GM12878 (cell line): ENCODE measurements at regions of chr14 and their contacts with region 1.

Region 1: DNA sequence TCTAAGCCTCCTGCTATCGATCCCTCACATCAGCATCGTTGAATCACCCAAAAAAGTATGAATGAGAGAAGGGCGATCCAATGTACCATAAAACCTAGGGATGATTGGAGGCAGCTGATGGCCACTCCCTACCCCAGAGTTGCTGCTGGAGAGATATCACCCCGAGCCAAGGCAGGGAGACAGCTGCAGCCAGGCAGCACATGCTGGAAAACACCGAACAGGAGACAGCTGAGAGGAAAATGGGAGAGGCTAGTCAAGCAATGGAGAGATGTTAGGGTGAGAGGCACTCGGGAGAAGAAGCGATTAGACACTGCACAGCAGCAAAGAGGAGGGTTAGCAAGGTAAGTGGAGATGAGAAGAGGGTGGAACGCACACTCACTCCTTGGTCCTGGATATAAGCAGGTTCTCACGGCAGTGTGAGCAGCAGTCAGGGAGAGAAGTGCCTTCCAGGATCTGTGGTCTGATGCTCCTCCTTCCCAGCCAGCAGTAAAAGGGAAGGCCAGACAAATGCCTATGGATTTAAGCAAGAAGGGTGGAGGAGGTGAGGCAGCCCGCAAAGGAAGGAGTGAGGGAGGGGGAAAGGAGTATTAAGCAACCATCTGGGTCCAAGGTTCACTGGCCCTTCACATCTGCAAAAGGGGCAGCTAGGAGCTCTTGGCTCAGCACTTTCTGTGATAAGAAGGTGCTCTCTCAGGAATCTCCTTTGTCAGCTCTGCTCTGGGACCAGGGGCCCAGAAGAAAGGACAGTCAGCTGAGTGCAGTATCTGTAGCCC is at the start of gene SLC7A7:
- DNase-seq: no peak
- ATAC-seq: peak; percentile 6
- H3K4me3 ChIP-seq: peak within 1 kb of the TSS; percentile 66
- H3K27ac ChIP-seq: peak within 1 kb of the TSS; percentile 75
- H3K4me1 ChIP-seq: peaks cover 28% of the 10 kb centered on the region
- H3K27me3 ChIP-seq: no peaks in the 10 kb centered on the region
- CTCF ChIP-seq: no peak
- EP300 ChIP-seq: no peak
- POLR2A ChIP-seq: no peak
- RAD21 ChIP-seq: no peak
- polyA plus RNA-seq, gene SLC7A7: 48.1 to 72.7 TPM

Region 2: DNA sequence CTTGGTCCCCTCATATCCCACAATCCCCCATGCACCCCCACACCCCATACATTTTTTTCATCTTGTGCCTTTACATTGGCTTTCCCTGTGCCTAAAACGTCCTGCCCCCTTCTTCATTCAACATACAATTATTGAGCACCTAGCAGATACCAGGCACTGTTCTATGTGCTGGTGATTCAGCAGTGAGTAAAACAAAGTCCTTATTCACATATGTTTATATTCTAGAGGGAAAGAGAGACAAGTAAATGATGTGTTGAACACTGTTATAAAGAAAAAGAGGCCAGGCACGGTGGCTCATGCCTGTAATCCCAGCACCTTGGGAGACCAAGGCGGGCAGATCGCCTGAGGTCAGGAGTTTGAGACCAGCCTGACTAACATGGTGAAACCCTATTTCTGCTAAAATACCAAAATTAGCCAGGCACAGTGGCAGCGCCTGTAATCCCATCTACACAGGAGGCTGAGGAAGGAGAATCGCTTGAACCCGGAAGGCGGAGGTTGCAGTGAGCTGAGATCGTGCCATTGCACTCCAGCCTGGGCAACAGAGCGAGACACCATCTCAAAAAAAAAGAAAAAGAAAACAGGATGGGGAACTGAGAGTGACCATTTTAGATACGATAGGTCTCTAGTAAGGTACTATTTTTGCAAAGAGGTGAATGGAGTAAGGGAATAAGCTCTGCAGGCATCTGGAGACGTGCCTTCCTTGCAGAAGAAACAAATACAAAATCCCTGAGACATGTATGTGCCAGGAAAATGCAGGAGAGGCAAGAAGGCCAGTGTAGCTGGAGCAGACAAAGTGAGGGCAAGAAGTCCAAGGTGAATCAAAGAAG is 12.1 kb before region 1 on chr14:
- CTCF ChIA-PET with region 1: interaction called, 37 read pairs
- POLR2A ChIA-PET with region 1: interaction called, 245 read pairs
- RAD21 ChIA-PET with region 1: interaction called, 219 read pairs
- SMC1A ChIA-PET with region 1: interaction called, 395 read pairs
- in situ Hi-C with region 1: no loop called
- intact Hi-C with region 1: no loop called
- DNase-seq: no peak
- ATAC-seq: peak; percentile 80
- H3K4me3 ChIP-seq: peak overlapping the region; percentile 61
- H3K27ac ChIP-seq: peak overlapping the region; percentile 98
- H3K4me1 ChIP-seq: peaks cover 58% of the 10 kb centered on the region
- H3K27me3 ChIP-seq: no peaks in the 10 kb centered on the region
- CTCF ChIP-seq: no peak
- EP300 ChIP-seq: 0 out of 4 replicates have a peak, but pooled peaks of 1 of the 2 experiments have one; percentile 11
- POLR2A ChIP-seq: no peak
- RAD21 ChIP-seq: no peak

Region 3: DNA sequence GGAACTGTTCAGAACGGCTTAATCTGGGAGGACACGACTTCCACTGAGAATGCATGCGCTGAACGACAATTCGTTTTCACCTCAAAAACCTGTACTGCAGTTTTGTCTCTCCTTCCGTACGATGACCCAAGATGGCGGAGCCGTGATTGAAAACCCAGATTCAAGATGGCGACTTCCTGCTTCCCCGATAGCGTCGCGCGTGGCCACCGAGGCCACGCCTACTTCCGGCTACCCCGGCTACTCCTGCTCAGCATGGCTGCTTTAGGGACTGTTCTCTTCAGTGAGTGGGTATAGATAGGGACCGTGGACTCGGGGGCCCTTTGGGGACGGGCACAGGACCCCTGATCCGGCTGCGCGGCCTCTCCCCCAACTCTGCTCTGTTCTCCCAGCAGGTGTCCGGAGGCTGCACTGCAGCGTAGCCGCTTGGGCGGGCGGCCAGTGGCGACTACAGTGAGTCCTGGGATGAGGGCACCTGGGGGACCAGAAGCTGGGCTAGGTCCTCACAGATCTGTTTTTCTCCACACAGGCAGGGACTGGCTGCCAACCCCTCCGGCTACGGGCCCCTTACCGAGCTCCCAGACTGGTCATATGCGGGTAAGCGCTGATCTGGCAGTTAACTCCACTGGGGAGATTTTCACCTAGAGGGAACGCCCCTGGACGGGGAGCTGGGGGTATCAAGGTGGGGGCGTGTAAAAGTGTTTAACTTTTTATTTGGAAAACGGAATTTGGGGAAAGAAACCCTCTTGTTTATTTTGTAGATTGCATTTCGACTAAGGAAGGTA is 14.7 kb after region 1 on chr14 and contains the start of gene MRPL52:
- CTCF ChIA-PET with region 1: interaction called, 14 read pairs
- POLR2A ChIA-PET with region 1: interaction called, 5 read pairs
- RAD21 ChIA-PET with region 1: interaction called, 3 read pairs
- SMC1A ChIA-PET with region 1: interaction called, 13 read pairs
- in situ Hi-C with region 1: no loop called
- intact Hi-C with region 1: no loop called
- DNase-seq: no peak
- ATAC-seq: peak; percentile 95
- H3K4me3 ChIP-seq: peak within 1 kb of the TSS; percentile 98
- H3K27ac ChIP-seq: peak within 1 kb of the TSS; percentile 41
- H3K4me1 ChIP-seq: peaks cover 12% of the 10 kb centered on the region
- H3K27me3 ChIP-seq: no peaks in the 10 kb centered on the region
- CTCF ChIP-seq: no peak
- EP300 ChIP-seq: no peak
- POLR2A ChIP-seq: peak; percentile 80
- RAD21 ChIP-seq: no peak
- polyA plus RNA-seq, gene MRPL52: 51.7 to 142 TPM

Region 4: GRCh38 chr14:23113431-23114119 is 298.4 kb after region 1 on chr14:
- CTCF ChIA-PET with region 1: no interaction called
- POLR2A ChIA-PET with region 1: no interaction called
- RAD21 ChIA-PET with region 1: no interaction called
- SMC1A ChIA-PET with region 1: no interaction called
- in situ Hi-C with region 1: no loop called
- intact Hi-C with region 1: no loop called
- DNase-seq: no peak
- ATAC-seq: no peak
- H3K4me3 ChIP-seq: no peak overlapping the region
- H3K27ac ChIP-seq: no peak overlapping the region
- H3K4me1 ChIP-seq: no peaks in the 10 kb centered on the region
- H3K27me3 ChIP-seq: peaks cover 0 to 7% of the 10 kb centered on the region in 2 experiments; a peak in 3 of 4 replicates
- CTCF ChIP-seq: no peak
- EP300 ChIP-seq: no peak
- POLR2A ChIP-seq: no peak
- RAD21 ChIP-seq: no peak